Activated T-helper 2 cell treated with anti-CD3 and anti-CD28 coated beads, Interferon-gamma antibody, Interleukin-2, Interleukin-4, amounts not matched to agents 10 μg/mL and 5 μg/mL and 100 μg/mL, durations not matched to agents 14 hours and 24 hours and 36 hours (primary cell): ENCODE measurements at regions of chr13 and their contacts with region 1.

Region 1: DNA sequence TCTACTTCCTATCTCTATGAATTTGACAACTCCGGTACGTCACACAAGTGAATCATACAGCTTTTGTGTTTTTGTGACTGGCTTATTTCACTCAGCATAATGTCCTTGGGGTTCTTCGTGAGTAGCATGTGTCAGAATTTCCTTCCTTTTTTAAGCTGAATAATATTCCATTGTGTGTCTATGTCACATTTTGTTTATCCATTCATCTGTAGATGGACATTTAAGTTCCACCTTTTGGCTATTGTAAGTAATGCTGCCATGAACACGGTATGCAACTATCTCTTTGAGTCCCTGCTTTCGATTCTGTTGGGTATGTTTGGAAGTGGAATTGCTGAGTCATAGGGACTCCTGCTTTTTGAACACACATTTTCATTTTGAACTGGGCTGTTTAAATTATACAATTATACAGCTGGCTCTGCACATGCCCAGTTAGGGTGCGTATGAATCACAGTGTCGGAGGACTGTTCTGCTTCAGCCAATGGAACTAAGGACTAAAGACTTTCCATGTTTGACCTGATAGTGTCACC is 43.0 kb upstream of the C13orf42 start:
- DNase-seq: no peak
- H3K4me3 Mint-ChIP-seq: peak overlapping the region; percentile 2
- H3K27ac Mint-ChIP-seq: peak overlapping the region; percentile 54
- H3K4me1 Mint-ChIP-seq: peaks cover 15% of the 10 kb centered on the region
- H3K27me3 Mint-ChIP-seq: peaks cover 7% of the 10 kb centered on the region

Region 2: DNA sequence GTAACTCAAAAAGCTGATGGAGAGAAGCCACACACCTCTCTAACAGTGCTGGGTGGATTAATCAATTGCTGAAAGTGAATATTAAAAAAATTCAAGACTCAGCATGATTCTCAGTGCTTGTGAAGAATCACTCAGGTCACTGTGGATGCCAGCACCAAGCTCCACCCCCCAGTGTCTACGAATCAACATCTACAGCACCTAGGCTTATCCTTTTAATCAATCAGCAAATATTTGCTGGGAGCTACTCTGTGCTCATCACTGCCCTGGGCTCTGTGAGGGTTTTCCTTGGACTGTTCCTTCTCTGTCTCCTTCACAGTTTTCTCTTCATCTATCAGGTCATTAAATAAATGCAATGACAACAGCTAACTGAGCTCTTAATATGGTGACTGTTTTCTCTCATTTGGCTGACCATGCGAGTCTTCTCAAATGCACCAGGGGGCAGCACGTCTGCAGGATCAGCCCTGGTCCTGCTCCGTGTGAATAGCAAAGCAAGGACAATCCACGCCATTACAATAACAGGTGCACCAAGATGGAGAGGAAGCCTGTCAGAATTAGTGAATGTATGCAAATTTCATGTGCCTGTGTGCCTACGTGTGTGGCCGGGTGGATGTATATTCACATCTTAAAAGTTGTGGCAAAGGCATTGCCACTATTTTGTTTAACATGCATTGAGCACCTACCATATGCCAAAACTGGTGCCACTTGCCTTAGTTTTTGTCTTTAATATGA is 28.4 kb before region 1 on chr13:
- intact Hi-C with region 1: loop called (anchors 2 kb)
- DNase-seq: no peak
- H3K4me3 Mint-ChIP-seq: no peak overlapping the region
- H3K27ac Mint-ChIP-seq: no peak overlapping the region
- H3K4me1 Mint-ChIP-seq: peaks cover 25% of the 10 kb centered on the region
- H3K27me3 Mint-ChIP-seq: peaks cover 18% of the 10 kb centered on the region

Region 3: GRCh38 chr13:51202477-51203046 is 48.5 kb after region 1 on chr13:
- intact Hi-C with region 1: loop called (anchors 1 kb)
- DNase-seq: no peak
- H3K4me3 Mint-ChIP-seq: no peak overlapping the region
- H3K27ac Mint-ChIP-seq: no peak overlapping the region
- H3K4me1 Mint-ChIP-seq: peaks cover 9% of the 10 kb centered on the region
- H3K27me3 Mint-ChIP-seq: peaks cover 17% of the 10 kb centered on the region